AG04449 (cell line): ENCODE measurements at regions of chr5 and their contacts with region 1.

Region 1: DNA sequence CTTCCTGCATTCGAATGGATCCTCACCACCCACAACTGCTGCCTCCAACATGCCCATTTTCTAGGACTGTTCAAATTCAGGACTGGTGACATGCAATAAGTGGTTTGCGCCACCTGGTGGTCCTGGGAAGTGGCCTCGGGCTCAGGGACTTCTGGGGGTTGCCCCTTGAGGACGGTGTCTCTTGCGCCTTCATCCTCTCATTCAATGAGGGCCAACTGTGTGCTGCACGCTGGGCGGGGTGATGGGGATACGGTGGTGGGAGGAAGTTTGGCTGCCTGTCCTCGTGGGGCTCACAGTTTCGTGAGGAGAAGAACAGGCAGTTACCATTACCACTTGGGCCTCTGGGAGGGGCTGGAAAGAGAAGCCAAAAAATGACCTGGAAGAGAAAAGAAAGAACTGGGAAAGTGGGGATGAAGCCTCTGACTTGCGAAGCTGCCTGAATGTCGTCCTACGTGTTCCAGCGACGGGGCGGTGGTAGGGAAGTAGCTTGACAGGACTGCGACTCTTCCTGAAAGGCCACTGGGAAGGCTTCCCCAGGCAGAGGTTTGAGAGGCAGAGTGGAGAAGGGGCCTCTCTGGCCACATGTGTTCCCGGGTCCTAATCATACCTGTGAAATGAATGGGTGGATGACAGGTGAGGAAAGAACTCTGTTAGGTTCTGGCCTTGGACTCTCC is 49.0 kb downstream of the PSD2 start:
- DNase-seq: peak; percentile 10
- H3K4me3 ChIP-seq: no peak overlapping the region
- CTCF ChIP-seq: peak; percentile 86

Region 2: GRCh38 chr5:139856714-139857113 is 12.1 kb after region 1 on chr5:
- CTCF ChIA-PET with region 1: interaction called, 53 read pairs
- POLR2A ChIA-PET with region 1: no interaction called
- DNase-seq: no peak
- H3K4me3 ChIP-seq: no peak overlapping the region
- CTCF ChIP-seq: no peak

Region 3: GRCh38 chr5:139863855-139864558 is 19.4 kb after region 1 on chr5:
- CTCF ChIA-PET with region 1: interaction called, 53 read pairs
- POLR2A ChIA-PET with region 1: no interaction called
- DNase-seq: no peak
- H3K4me3 ChIP-seq: no peak overlapping the region
- CTCF ChIP-seq: peak; percentile 72